Prostate gland (tissue), 2 donors: ENCODE measurements at regions of chr20 and their contacts with region 1.

Region 1: GRCh38 chr20:10922941-10923340 is 249.1 kb upstream of the JAG1 start:
- DNase-seq: no peak
- H3K4me3 ChIP-seq: no peak overlapping the region
- H3K27ac ChIP-seq: no peak overlapping the region
- H3K4me1 ChIP-seq: no peaks in the 10 kb centered on the region
- H3K27me3 ChIP-seq: no peaks in the 10 kb centered on the region
- CTCF ChIP-seq: no peak
- POLR2A ChIP-seq: no peak

Region 2: DNA sequence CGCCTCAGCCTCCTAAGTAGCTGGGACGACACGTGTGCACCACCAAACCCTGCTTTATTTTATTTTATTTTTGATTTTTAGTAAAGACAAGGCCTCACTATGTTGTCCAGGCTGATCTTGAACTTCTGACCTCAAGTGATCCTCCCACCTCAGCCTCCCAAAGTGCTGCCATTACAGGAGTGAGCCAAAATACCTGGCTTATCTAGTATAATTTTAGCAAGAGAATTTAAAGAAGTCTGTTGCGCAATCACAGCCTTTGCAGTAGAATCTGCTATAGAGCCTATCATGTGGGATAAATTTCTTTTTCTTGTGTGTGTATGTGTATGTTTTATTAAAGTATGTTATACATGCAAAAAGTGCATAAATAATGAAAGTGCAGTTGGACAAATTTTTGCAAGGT is 980.2 kb before region 1 on chr20:
- intact Hi-C with region 1: no loop called
- DNase-seq: no peak
- H3K4me3 ChIP-seq: no peak overlapping the region
- H3K27ac ChIP-seq: no peak overlapping the region
- H3K4me1 ChIP-seq: no peaks in the 10 kb centered on the region
- H3K27me3 ChIP-seq: no peaks in the 10 kb centered on the region
- CTCF ChIP-seq: no peak
- POLR2A ChIP-seq: no peak

Region 3: DNA sequence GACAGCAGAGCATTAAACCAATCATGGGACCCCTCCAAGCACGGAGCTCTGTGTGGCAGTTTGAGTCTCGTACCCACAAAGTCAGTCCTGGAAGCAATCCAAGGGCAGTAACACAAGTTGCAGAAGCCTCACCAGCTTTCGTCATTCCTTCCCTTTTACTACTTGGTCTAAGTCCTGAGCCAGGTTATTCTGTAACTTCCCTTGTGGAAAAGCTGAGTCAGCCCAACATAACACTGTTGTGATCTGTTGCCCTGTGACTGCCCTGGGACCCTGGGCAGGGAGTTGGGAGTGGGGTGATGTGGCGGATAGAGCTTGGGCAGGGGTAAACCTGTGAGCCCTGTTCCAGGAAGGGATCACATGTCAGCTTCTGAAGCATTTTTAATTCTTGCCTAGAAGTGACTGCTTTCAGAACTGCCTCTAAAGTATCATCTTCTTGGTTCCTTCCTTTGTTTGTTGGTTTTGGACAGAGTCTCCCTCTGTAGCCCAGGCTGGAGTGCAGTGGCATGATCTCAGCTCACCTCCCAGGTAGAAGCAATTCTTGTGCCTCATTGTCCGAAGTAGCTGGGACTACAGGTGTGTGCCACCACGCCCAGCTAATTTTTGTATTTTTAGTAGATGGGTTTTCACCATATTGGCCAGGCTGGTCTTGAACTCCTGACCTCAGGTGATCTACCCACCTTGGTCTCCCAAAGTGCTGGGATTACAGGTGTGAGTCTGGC is 65.4 kb before region 1 on chr20:
- intact Hi-C with region 1: loop called (anchors 10 kb)
- DNase-seq: no peak
- H3K4me3 ChIP-seq: no peak overlapping the region
- H3K27ac ChIP-seq: no peak overlapping the region
- H3K4me1 ChIP-seq: no peaks in the 10 kb centered on the region
- H3K27me3 ChIP-seq: no peaks in the 10 kb centered on the region
- CTCF ChIP-seq: no peak
- POLR2A ChIP-seq: no peak

Region 4: DNA sequence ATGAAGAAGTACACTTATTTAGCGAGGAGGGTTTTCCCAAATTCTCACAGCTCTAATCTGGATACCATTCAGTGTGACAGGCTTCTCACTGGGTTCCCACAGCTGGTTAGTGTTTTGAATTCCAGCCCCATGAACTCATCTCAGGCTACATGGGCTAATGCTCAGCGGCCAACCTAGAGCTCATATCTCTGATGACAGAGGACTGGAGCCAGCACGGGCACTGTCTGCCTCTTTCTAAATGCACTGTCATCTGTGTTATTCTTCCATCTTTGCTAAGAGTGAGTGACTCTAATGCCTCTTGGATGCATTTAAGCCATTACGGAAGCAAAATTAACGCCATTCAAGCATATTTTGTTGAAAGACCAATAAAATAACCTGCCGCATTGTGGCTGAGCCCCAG is 59.8 kb after region 1 on chr20:
- intact Hi-C with region 1: loop called (anchors 10 kb)
- DNase-seq: no peak
- H3K4me3 ChIP-seq: no peak overlapping the region
- H3K27ac ChIP-seq: no peak overlapping the region
- H3K4me1 ChIP-seq: no peaks in the 10 kb centered on the region
- H3K27me3 ChIP-seq: no peaks in the 10 kb centered on the region
- CTCF ChIP-seq: no peak
- POLR2A ChIP-seq: no peak

Region 5: DNA sequence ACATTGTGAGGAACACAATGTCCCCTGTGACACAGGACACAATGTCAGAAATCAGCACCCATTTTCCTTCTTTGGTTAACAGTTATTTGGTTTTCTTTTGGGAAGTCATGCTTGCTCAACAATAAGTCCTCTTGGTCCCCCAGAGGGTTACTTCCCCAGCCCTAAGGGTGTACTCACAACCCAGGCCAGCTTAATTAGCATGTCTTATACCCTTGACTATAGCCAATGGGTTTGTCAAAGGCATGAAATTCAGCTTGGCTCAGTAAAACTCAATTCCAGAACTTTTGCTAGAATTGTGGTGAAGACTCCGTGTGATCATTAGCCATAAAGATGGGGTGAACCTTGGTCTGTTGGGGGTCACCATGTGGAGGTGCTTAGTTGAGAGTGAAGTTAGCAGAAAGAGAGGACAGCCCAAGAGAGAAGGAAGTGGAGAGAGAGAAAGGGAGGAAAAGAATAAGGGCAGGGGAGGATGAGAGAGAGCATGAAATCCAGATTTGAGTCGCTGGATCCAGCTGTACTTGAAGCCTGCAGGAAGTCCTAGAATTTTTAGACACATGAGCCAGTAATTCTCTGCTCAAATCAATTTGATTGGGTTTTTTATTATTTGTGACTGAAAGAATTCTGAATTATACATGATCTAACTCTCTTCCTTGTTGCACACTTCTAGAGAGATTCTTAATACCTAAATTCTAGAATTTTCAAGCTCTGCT is 72.2 kb after region 1 on chr20:
- intact Hi-C with region 1: no loop called
- DNase-seq: no peak
- H3K4me3 ChIP-seq: no peak overlapping the region
- H3K27ac ChIP-seq: no peak overlapping the region
- H3K4me1 ChIP-seq: no peaks in the 10 kb centered on the region
- H3K27me3 ChIP-seq: no peaks in the 10 kb centered on the region
- CTCF ChIP-seq: no peak
- POLR2A ChIP-seq: no peak